ENCODE measurements at regions of chr11 and their contacts with region 1.

Region 1: DNA sequence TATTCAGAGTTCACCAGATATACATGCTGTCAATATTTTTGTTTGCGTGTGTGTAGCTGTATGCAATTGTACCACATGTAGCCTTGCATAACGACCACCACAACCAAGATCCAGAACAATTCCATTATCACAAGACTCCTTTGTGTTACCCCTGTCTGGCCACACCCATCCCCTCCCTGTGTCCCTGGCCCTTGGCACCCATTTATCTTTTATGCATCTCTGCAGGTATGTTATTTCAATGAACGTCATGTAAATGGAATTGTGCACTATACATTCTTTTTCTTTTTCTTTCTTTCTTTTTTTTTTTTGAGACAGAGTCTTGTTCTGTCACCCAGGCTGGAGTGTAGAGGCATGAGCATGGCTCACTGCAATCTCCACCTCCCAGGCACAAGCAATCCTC is 9.7 kb upstream of the PAFAH1B2 start:
- DNase-seq: no peak
- ATAC-seq: no peak
- H3K4me3 ChIP-seq: no peak overlapping the region
- H3K27ac ChIP-seq: no peak overlapping the region
- H3K4me1 ChIP-seq: peaks cover 0 to 6% of the 10 kb centered on the region in 2 experiments; a peak in 2 of 4 replicates
- H3K27me3 ChIP-seq: no peaks in the 10 kb centered on the region
- CTCF ChIP-seq: no peak
- POLR2A ChIP-seq: no peak
- RAD21 ChIP-seq: no peak

Region 2: GRCh38 chr11:116787786-116788486 is 346.5 kb before region 1 on chr11 and contains the start of gene ZPR1:
- CTCF ChIA-PET with region 1: no interaction called
- POLR2A ChIA-PET with region 1: no interaction called
- RAD21 ChIA-PET with region 1: no interaction called
- intact Hi-C with region 1: no loop called
- DNase-seq: peak; percentile 56
- ATAC-seq: peak; percentile 80
- H3K4me3 ChIP-seq: peak within 1 kb of the TSS; percentile 93 to 94
- H3K27ac ChIP-seq: peak within 1 kb of the TSS; percentile 43; the same call in 1 of the 2 replicates
- H3K4me1 ChIP-seq: peaks cover 12 to 29% of the 10 kb centered on the region in 2 experiments
- H3K27me3 ChIP-seq: no peaks in the 10 kb centered on the region
- CTCF ChIP-seq: no peak
- POLR2A ChIP-seq: no peak
- RAD21 ChIP-seq: no peak
- total RNA-seq, gene ZPR1: 56.3 TPM

Region 3: GRCh38 chr11:117152066-117152465 is 17.6 kb after region 1 on chr11:
- CTCF ChIA-PET with region 1: no interaction called
- POLR2A ChIA-PET with region 1: no interaction called
- RAD21 ChIA-PET with region 1: no interaction called
- intact Hi-C with region 1: no loop called
- DNase-seq: no peak
- ATAC-seq: no peak
- H3K4me3 ChIP-seq: no peak overlapping the region
- H3K27ac ChIP-seq: no peak overlapping the region
- H3K4me1 ChIP-seq: peaks cover 0 to 3% of the 10 kb centered on the region in 2 experiments; a peak in 2 of 4 replicates
- H3K27me3 ChIP-seq: no peaks in the 10 kb centered on the region
- CTCF ChIP-seq: no peak
- POLR2A ChIP-seq: no peak
- RAD21 ChIP-seq: no peak

Region 4: GRCh38 chr11:117205211-117205818 is 70.9 kb after region 1 on chr11:
- CTCF ChIA-PET with region 1: interaction called, 3 read pairs
- POLR2A ChIA-PET with region 1: no interaction called
- RAD21 ChIA-PET with region 1: no interaction called
- intact Hi-C with region 1: loop called (anchors 2 kb)
- DNase-seq: no peak
- ATAC-seq: no peak
- H3K4me3 ChIP-seq: no peak overlapping the region
- H3K27ac ChIP-seq: no peak overlapping the region
- H3K4me1 ChIP-seq: peaks cover 0 to 3% of the 10 kb centered on the region in 2 experiments; a peak in 1 of 4 replicates
- H3K27me3 ChIP-seq: no peaks in the 10 kb centered on the region
- CTCF ChIP-seq: no peak
- POLR2A ChIP-seq: no peak
- RAD21 ChIP-seq: peak; percentile 6; the same call in 1 of the 2 replicates

Region 5: GRCh38 chr11:117786135-117786890 is 651.9 kb after region 1 on chr11:
- CTCF ChIA-PET with region 1: no interaction called
- POLR2A ChIA-PET with region 1: no interaction called
- RAD21 ChIA-PET with region 1: no interaction called
- intact Hi-C with region 1: no loop called
- DNase-seq: no peak
- ATAC-seq: no peak
- H3K4me3 ChIP-seq: no peak overlapping the region
- H3K27ac ChIP-seq: no peak overlapping the region
- H3K4me1 ChIP-seq: no peaks in the 10 kb centered on the region
- H3K27me3 ChIP-seq: peaks cover 79% of the 10 kb centered on the region
- CTCF ChIP-seq: no peak
- POLR2A ChIP-seq: no peak
- RAD21 ChIP-seq: no peak

Measured in HCT116 (cell line).